Adrenal gland (tissue), 19 donors: ENCODE measurements at regions of chr7 and their contacts with region 1.

Region 1: DNA sequence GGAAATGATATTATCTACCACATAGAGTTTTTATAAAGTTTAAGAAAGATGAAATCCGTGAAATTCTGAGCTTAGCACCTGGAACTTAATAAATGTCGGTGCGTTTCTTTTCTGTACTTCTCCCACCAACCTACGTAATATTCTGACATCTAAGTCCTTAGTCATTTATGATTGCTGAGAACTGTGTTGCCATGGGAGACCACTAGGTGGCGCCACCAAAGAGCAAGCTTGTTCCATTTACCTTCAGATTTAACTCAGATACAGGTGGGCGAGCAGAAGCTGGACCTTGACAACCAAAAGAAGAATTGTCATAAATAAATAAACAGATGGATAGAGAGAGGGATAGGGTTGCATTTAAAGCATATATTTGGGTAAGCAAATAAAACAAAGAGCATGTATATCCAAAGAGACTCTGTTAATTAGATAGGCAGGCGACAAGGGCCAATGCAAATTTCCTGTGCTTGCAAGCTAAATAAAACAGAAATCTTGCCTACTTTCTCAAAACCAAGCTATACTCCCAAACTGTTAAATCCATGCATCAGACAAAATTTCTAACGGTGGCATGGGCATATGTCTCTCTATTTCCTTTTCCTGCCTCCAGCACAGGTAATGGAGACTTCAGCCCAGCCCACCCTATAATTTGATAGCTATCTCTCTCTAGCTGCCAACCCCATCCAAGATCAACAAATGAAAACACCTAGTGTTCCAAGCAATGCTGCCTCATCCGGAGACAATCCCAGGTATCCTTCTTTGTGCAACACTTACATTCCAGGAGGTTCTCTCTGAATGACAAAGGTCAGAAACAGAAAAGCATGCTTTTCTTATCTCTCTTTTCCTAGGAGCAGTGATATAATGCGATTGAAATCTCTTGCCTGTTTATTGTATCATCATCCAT is 699.6 kb downstream of the INHBA start:
- DNase-seq: peak; percentile 29 to 80 (median 60)
- H3K4me3 ChIP-seq: no peak overlapping the region
- H3K27ac ChIP-seq: no peak overlapping the region
- H3K4me1 ChIP-seq: no peaks in the 10 kb centered on the region
- H3K27me3 ChIP-seq: no peaks in the 10 kb centered on the region
- CTCF ChIP-seq: peak; percentile 43 to 74 (median 67)
- POLR2A ChIP-seq: no peak

Region 2: DNA sequence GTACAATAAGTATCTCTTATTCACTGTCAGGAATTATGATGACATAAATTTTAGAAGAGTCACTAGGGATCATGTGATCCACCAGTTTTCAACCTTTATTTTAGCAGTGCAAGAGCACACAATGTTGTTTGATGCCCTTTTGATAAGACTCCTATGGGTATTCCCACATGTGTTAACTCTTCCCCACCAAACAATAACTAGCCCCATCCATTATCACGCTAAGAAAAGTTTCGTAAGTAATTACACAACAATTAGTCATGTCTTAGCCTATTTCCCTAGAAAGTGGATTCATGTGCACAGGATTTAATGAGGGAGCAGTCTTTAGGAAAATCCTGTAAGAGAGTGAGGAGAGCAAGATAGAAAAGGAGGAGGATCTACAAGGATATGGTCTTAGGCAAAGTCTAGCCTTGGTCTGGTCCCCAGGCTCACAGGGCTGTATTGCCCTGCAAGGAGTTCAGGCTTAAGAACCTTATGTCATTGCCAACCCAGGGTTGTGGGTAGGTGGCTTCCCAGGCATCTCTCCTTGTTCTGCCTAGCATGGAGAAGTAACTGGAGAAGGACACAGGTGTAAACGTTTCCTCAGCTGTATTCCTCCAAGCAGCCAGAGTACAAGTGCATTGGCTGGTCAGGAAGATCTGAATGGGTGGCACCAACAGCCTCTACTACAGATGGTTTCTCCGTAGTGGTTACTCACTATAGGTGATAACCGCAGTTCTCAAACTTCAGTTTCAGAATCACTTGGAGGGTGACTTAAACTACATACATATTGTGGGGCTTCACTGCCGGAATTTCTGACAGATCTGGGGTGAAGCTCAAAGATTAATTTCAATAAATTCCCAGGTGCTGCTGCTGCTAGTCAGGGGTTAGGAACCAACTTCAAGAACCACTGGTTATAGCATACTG is 294.0 kb before region 1 on chr7:
- intact Hi-C with region 1: no loop called
- DNase-seq: no peak
- H3K4me3 ChIP-seq: no peak overlapping the region
- H3K27ac ChIP-seq: no peak overlapping the region
- H3K4me1 ChIP-seq: no peaks in the 10 kb centered on the region
- H3K27me3 ChIP-seq: no peaks in the 10 kb centered on the region
- CTCF ChIP-seq: no peak
- POLR2A ChIP-seq: no peak

Region 3: DNA sequence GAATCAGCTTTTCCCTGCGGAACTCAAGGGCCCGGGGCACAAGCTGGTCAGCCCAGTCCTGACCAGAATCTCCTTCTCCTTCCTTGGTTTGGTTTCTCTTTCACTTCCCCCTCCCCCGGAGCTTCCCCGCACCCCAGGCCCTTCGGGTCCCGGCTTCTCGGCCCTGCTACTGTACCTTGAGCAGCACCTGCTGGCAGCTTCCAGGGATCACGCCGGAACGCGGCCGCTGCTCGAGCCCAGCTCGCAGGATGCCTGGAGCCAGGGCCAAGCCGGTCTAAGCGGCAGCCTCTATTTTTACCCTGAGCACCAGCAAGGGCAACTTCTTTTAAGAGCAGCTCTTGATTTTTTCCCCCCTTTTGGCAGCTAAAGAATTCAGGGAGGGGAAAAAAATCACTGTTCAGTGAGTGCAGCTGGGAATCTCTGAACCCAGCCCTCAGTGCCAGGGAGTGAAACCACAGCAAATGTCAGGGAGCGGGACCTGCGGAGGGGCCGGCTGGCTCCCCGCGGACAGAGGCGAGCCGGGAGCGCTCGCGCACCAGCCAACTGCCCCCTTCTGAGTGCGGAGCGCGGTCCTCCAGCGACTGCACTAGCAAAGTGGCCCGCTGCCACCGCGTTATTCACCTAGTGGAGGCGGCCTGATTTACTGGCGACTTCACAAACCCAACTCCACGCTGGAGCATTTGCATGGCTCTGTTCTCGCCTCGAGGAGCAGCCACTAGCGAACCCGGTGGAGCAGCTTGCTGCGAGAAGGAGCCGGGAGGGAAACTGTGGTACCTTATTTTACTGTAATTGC is 702.0 kb after region 1 on chr7:
- intact Hi-C with region 1: loop called in 1 of 2 experiments (anchors 10 kb)
- DNase-seq: peak; percentile 86 to 96 (median 93)
- H3K4me3 ChIP-seq: peak overlapping the region; percentile 34 to 64 (median 44)
- H3K27ac ChIP-seq: peak overlapping the region; percentile 4 to 85 (median 67)
- H3K4me1 ChIP-seq: peaks cover 0 to 7% of the 10 kb centered on the region in 2 donors
- H3K27me3 ChIP-seq: no peaks in the 10 kb centered on the region
- CTCF ChIP-seq: peak; percentile 50 to 81 (median 68)
- POLR2A ChIP-seq: peak; percentile 9 to 34